Heart right ventricle (tissue), 16 donors: ENCODE measurements at regions of chr19 and their contacts with region 1.

Region 1: DNA sequence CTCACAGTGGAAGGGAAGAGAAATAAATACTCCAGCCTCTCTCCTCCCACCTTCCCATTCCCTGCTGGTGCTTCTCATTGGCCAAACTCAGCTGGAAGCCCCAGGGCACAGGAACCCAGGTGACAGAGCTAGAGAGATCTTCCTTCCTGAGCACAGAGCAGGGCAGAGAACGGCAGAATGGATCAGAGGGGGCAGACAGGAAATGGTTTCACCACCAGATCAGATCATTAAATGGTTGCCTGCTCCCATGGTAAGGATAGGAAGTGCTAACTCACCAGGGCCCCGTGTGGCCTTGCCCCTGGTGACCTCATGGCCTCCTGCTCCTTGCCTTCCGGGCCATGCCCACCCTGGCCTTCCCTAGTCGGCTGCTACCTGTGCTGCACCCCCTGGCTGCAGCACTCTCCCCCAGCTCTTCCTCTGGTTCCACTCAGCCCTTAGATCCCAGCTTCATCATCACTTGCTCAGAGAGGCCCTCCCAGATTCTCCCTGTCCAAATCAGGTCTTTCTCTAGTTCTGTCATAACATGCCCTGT is 108.7 kb downstream of the DPF1 start:
- DNase-seq: no peak
- ATAC-seq: peak in 1 of 8 donors; percentile 44
- H3K4me3 ChIP-seq: no peak overlapping the region
- H3K27ac ChIP-seq: no peak overlapping the region
- H3K4me1 ChIP-seq: no peaks in the 10 kb centered on the region
- H3K27me3 ChIP-seq: no peaks in the 10 kb centered on the region
- CTCF ChIP-seq: no peak

Region 2: GRCh38 chr19:38079926-38080380 is 35.4 kb before region 1 on chr19:
- intact Hi-C with region 1: loop called in 1 of 10 experiments (anchors 1 kb)
- DNase-seq: no peak
- ATAC-seq: peak in 2 of 8 donors; percentile 30 to 42
- H3K4me3 ChIP-seq: no peak overlapping the region
- H3K27ac ChIP-seq: peak overlapping the region in 1 of 10 donors; percentile 6
- H3K4me1 ChIP-seq: peaks cover 0 to 12% (median 0%) of the 10 kb centered on the region in 9 donors
- H3K27me3 ChIP-seq: no peaks in the 10 kb centered on the region
- CTCF ChIP-seq: no peak

Region 3: DNA sequence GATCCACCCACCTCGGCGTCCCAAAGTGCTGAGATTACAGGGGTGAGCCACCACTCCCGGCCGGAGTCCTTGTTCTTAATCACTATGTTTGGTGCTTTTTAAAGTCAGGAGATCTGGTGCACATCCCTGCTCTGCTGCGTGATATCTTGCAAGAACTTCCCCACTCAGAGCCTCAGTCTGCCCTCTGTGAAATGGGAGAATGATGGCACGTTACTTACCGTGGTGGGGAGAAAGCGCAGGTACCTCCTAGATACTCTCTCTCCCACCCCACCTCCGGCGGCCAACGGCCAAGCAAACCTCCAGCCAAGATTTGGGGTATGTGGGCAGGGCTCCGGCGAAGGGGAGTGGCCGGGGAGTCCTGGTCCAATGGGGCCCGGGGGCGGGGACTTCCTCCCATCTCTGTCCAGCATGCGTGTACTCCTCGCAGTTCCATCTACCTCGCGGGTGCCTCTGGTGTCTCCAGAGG is 318.0 kb after region 1 on chr19 and contains the start of gene RYR1:
- intact Hi-C with region 1: no loop called
- DNase-seq: peak; percentile 27 to 63
- ATAC-seq: peak in 7 of 8 donors; percentile 49 to 90 (median 78)
- H3K4me3 ChIP-seq: peak within 1 kb of the TSS in 2 of 10 donors; percentile 12 to 18
- H3K27ac ChIP-seq: no peak within 1 kb of the TSS
- H3K4me1 ChIP-seq: peaks cover 0 to 12% (median 0%) of the 10 kb centered on the region in 9 donors
- H3K27me3 ChIP-seq: peaks cover 6 to 65% (median 42%) of the 10 kb centered on the region in 7 donors
- CTCF ChIP-seq: no peak
- total RNA-seq, gene RYR1: 0.30 to 1.7 (median 0.74) TPM